HEK293T (cell line): ENCODE measurements at regions of chrX and their contacts with region 1.

Region 1: GRCh38 chrX:31658360-31658759 is 586.5 kb upstream of the FTHL17 start:
- DNase-seq: peak; percentile 8

Region 2: DNA sequence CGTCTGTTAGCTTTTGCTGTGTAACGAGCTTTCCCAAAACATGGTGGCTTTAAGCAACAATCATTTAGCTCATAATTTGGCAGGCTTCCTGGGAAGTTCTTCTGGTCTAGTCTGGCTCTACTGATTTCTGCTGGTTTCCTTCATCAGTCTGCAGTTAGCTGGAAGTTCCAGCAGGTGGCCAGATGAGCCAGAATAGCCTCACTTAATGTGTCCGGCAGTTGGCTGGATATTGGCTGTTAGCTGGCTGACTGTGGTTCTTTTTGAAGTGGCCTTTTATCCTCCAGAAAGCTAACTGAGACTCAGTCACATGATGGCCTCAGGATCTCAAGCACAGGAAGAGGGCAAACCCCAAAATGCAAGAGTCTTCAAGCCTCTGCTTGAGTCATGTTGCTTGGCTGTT is 621.5 kb before region 1 on chrX:
- CTCF ChIA-PET with region 1: interaction called, 18 read pairs
- POLR2A ChIA-PET with region 1: no interaction called
- DNase-seq: peak; percentile 64

Region 3: GRCh38 chrX:31546130-31546529 is 112.2 kb before region 1 on chrX:
- CTCF ChIA-PET with region 1: no interaction called
- POLR2A ChIA-PET with region 1: no interaction called
- DNase-seq: no peak